Adrenal gland (tissue), 19 donors: ENCODE measurements at regions of chr11 and their contacts with region 1.

Region 1: GRCh38 chr11:109960831-109961230 is 132.4 kb upstream of the ZC3H12C start:
- DNase-seq: peak; percentile 76 to 94 (median 94)
- H3K4me3 ChIP-seq: no peak overlapping the region
- H3K27ac ChIP-seq: peak overlapping the region; percentile 56 to 78 (median 67)
- H3K4me1 ChIP-seq: peaks cover 0 to 5% of the 10 kb centered on the region in 2 donors
- H3K27me3 ChIP-seq: no peaks in the 10 kb centered on the region
- CTCF ChIP-seq: no peak
- POLR2A ChIP-seq: peak in 1 of 2 donors; percentile 50

Region 2: GRCh38 chr11:110026858-110027626 is 66.2 kb after region 1 on chr11:
- intact Hi-C with region 1: loop called in 1 of 2 experiments (anchors 10 kb)
- DNase-seq: peak in 2 of 7 donors; percentile 21 to 37
- H3K4me3 ChIP-seq: no peak overlapping the region
- H3K27ac ChIP-seq: peak overlapping the region in 1 of 5 donors; percentile 37
- H3K4me1 ChIP-seq: no peaks in the 10 kb centered on the region
- H3K27me3 ChIP-seq: no peaks in the 10 kb centered on the region
- CTCF ChIP-seq: no peak
- POLR2A ChIP-seq: no peak

Region 3: DNA sequence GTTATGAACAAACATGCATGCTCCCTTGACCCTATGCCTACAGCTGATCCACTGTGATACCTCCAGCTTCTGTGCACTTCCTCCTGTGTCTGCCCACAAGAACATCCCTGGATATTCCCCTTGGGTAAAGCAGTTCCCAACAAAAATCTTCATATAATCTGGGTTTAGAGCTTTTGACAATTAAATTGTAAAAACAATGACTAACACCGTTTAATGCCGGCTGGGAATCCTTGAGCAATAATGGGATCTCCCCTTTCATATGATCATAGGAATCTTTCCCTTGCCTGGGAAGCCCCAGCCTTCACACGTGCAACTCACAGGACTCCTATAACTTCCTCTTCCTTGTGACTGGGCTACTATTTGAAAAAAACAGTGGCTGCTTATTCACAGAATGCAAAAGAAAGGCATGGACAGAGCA is 126.1 kb after region 1 on chr11:
- intact Hi-C with region 1: loop called in 1 of 2 experiments (anchors 10 kb)
- DNase-seq: peak in 1 of 7 donors; percentile 37
- H3K4me3 ChIP-seq: no peak overlapping the region
- H3K27ac ChIP-seq: no peak overlapping the region
- H3K4me1 ChIP-seq: peaks cover 0 to 10% of the 10 kb centered on the region in 2 donors
- H3K27me3 ChIP-seq: no peaks in the 10 kb centered on the region
- CTCF ChIP-seq: no peak
- POLR2A ChIP-seq: no peak